ENCODE measurements at regions of chr11 and their contacts with region 1.

Region 1: GRCh38 chr11:11265994-11266606 is 87.0 kb downstream of the CSNK2A3 start:
- DNase-seq: peak; percentile 62
- H3K4me3 ChIP-seq: no peak overlapping the region
- H3K27ac ChIP-seq: no peak overlapping the region
- H3K4me1 ChIP-seq: no peaks in the 10 kb centered on the region
- H3K27me3 ChIP-seq: no peaks in the 10 kb centered on the region
- CTCF ChIP-seq: peak; percentile 79

Region 2: DNA sequence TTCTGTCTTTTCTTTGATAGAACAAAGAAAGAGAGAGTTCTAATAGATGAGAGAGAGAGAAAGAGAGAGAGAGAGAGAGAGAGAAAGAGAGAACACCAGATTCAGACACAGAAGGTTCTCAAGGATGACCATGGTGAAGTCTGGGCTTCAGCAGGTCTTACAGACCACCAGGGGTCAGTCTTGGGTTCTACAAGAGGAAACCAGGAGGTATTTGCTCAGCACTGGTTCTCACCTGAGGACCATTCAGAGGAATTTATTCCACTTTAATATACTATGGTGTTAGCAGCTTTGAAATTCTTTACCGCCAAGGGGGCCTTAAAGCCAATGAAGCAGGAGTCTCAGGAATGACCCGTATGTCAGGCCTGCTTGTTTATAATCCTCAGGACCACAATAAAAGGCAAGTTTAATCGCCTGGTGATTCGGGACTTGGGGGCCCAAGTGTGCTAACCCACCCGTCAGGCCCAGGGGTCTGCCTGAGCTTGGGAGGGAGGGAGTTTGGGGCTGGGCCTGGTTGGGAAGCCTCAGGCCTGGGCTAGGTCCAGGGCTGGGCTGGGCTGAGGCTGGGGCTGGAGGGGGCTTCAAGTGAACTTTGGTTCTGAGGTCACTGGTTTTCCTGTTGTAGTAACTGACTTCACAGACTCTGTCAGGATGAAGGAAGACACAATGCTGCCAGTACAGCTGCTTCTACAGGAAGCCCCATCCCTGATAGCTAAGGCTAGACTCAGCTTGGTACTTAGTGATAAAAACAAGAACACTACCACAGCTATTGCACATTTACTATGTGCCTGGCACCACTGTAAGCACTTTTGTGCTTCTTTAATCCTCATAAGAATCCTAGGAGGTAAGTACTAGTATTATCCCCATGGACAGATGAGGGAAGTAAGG is 229.0 kb before region 1 on chr11:
- intact Hi-C with region 1: loop called (anchors 10 kb)
- DNase-seq: peak; percentile 26
- H3K4me3 ChIP-seq: no peak overlapping the region
- H3K27ac ChIP-seq: no peak overlapping the region
- H3K4me1 ChIP-seq: no peaks in the 10 kb centered on the region
- H3K27me3 ChIP-seq: no peaks in the 10 kb centered on the region
- CTCF ChIP-seq: peak; percentile 51

Region 3: GRCh38 chr11:11798586-11799438 is 532.7 kb after region 1 on chr11:
- intact Hi-C with region 1: no loop called
- DNase-seq: peak; percentile 88
- H3K4me3 ChIP-seq: no peak overlapping the region
- H3K27ac ChIP-seq: no peak overlapping the region
- H3K4me1 ChIP-seq: no peaks in the 10 kb centered on the region
- H3K27me3 ChIP-seq: no peaks in the 10 kb centered on the region
- CTCF ChIP-seq: peak; percentile 59

Measured in colonic mucosa (tissue), 4 donors.